ENCODE measurements at regions of chr9 and their contacts with region 1.

Region 1: GRCh38 chr9:121213136-121213806 is 11.6 kb upstream of the RAB14 start:
- DNase-seq: peak; percentile 80
- H3K4me3 ChIP-seq: no peak overlapping the region; a peak in 1 of 4 replicates
- H3K27ac ChIP-seq: no peak overlapping the region
- H3K4me1 ChIP-seq: no peaks in the 10 kb centered on the region
- H3K27me3 ChIP-seq: no peaks in the 10 kb centered on the region
- CTCF ChIP-seq: peak; percentile 96
- EP300 ChIP-seq: no peak
- RAD21 ChIP-seq: peak; percentile 94

Region 2: DNA sequence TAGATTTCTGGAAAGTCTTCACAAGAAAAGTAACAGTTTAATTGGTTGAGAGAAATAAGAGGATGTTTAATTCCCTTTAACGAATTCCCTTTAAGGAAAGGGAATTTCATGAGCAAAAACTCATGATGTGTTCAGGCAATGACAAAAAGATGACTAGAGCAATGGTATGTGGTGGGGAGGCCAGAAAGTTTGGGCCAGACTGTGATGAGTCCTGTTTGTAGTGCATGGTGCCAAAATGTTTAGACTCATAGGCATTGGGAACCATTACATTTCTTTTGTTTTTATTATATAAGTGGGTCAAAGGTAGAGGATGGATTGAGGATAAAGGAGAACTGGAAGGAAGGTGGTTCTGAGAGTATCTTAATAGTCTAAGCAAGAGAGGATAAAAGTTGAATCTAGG is 127.6 kb before region 1 on chr9:
- CTCF ChIA-PET with region 1: no interaction called
- POLR2A ChIA-PET with region 1: no interaction called
- DNase-seq: no peak
- H3K4me3 ChIP-seq: no peak overlapping the region
- H3K27ac ChIP-seq: no peak overlapping the region
- H3K4me1 ChIP-seq: no peaks in the 10 kb centered on the region; a peak in 1 of 4 replicates
- H3K27me3 ChIP-seq: no peaks in the 10 kb centered on the region
- CTCF ChIP-seq: no peak
- EP300 ChIP-seq: no peak
- RAD21 ChIP-seq: no peak

Region 3: DNA sequence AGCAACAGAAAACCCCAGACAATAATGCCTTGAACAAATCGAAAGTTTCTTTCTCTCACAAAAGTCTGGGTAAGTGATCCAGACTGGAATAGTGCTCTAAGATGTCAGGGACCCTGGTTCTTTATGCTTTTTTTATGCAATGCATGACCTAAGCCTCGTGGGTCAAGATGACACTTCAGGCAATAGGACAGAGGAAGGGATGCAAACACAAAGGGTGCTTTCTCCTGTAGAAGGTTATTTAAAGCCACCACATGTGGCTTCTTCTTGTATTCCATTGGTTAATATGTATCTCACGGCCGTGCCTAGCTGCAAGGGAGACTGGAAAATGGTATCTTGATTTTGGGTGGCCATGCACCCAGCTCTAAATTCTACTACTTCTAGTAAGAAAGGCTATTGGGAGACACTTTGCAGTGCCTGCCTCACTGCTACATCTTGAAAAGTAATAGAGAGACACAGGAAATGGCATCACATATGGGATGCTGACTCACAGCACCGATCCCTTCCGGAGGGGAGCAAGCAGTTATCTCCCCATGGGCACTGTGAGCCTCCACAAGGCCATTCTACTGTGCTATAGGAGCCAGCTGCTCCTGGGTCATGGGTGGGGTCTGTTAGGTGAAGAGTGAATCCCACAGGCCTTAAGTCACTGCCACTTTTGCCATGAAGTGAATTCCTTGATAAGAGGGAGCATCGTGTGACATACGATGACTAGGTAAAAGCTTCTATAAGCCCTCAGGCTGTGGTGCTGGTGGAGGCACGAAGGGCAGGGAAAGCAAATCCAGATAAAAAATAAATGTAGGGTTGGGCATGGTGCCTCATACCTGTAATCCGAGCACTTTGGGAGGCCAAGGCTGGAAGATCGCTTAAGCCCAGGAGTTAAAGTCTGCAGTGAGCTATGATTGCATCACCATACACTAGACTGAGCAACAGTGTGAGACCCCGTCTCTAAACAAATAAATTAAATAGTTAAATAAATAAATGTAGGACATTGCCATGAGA is 20.9 kb after region 1 on chr9:
- CTCF ChIA-PET with region 1: interaction called, 12 read pairs
- POLR2A ChIA-PET with region 1: no interaction called
- DNase-seq: no peak
- H3K4me3 ChIP-seq: no peak overlapping the region
- H3K27ac ChIP-seq: peak overlapping the region in 1 of 2 experiments; percentile 55; a peak in 2 of 4 replicates
- H3K4me1 ChIP-seq: peaks cover 2 to 9% of the 10 kb centered on the region in 2 experiments; a peak in 3 of 4 replicates
- H3K27me3 ChIP-seq: no peaks in the 10 kb centered on the region
- CTCF ChIP-seq: no peak
- EP300 ChIP-seq: no peak
- RAD21 ChIP-seq: no peak

Region 4: DNA sequence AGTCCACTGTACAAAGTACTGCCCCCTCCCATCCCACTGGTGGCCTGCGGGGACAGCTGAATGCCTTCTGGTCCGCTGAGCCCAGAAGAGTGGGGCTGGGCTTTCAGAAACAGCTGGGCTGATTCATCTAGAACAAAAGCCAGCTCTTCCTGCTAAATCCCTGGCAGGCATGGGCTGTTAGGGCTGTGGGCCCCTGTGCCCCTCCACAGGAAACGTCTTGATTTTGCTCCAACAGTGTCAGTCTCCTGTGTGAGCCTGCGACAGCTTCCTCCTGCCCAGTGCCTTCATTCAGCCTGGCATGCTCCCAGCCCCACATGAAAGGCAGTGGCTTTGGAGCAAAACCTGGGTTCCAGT is 47.8 kb after region 1 on chr9:
- CTCF ChIA-PET with region 1: interaction called, 10 read pairs
- POLR2A ChIA-PET with region 1: no interaction called
- DNase-seq: peak; percentile 58
- H3K4me3 ChIP-seq: no peak overlapping the region
- H3K27ac ChIP-seq: no peak overlapping the region
- H3K4me1 ChIP-seq: peaks cover 16 to 26% of the 10 kb centered on the region in 2 experiments
- H3K27me3 ChIP-seq: no peaks in the 10 kb centered on the region
- CTCF ChIP-seq: no peak
- EP300 ChIP-seq: no peak
- RAD21 ChIP-seq: no peak

Region 5: GRCh38 chr9:121278535-121279261 is 65.4 kb after region 1 on chr9:
- CTCF ChIA-PET with region 1: interaction called, 17 read pairs
- POLR2A ChIA-PET with region 1: no interaction called
- DNase-seq: peak; percentile 59
- H3K4me3 ChIP-seq: peak overlapping the region in 1 of 2 experiments; percentile 40; a peak in 2 of 4 replicates
- H3K27ac ChIP-seq: peak overlapping the region; percentile 90 to 95
- H3K4me1 ChIP-seq: peaks cover 33 to 75% of the 10 kb centered on the region in 2 experiments
- H3K27me3 ChIP-seq: no peaks in the 10 kb centered on the region
- CTCF ChIP-seq: peak; percentile 86
- EP300 ChIP-seq: peak; percentile 29 to 74; a peak in 1 of 4 replicates
- RAD21 ChIP-seq: peak; percentile 61

Region 6: GRCh38 chr9:121329179-121329681 is 116.0 kb after region 1 on chr9:
- CTCF ChIA-PET with region 1: no interaction called
- POLR2A ChIA-PET with region 1: no interaction called
- DNase-seq: no peak
- H3K4me3 ChIP-seq: no peak overlapping the region
- H3K27ac ChIP-seq: no peak overlapping the region
- H3K4me1 ChIP-seq: peaks cover 0 to 5% of the 10 kb centered on the region in 2 experiments; a peak in 1 of 4 replicates
- H3K27me3 ChIP-seq: no peaks in the 10 kb centered on the region
- CTCF ChIP-seq: no peak
- EP300 ChIP-seq: no peak
- RAD21 ChIP-seq: no peak

Measured in SK-N-SH (cell line).